K562 (cell line): ENCODE measurements at regions of chr3 and their contacts with region 1.

Region 1: DNA sequence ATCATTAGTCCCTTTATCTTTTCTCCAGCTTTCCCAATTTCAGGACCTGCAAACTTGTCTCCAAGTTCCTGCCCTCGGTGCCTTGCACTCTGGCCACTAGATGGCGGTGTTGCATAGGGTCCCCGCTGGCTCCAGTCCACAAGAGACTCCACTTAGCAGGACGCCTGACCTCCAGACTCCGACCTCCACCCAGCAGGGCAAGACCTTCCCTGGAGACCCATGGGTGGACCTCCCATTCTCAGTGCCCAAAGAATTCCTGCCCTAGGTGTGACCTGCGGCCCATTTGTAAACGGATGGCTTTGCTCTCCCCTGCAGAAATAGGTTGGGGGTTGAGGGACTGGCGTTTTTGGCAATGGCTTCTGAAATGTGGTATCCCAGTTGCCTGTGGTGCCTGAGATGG is 82.6 kb downstream of the LSM3 start:
- DNase-seq: peak; percentile 92 to 96 (median 94)
- ATAC-seq: peak; percentile 90
- H3K4me3 ChIP-seq: no peak overlapping the region
- H3K27ac ChIP-seq: no peak overlapping the region
- H3K4me1 ChIP-seq: peaks cover 20 to 25% of the 10 kb centered on the region in 2 experiments
- H3K27me3 ChIP-seq: no peaks in the 10 kb centered on the region
- CTCF ChIP-seq: peak; percentile 96 to 99 (median 99)
- EP300 ChIP-seq: peak; percentile 46; the same call in 1 of the 2 replicates
- POLR2A ChIP-seq: no peak
- RAD21 ChIP-seq: peak; percentile 99

Region 2: DNA sequence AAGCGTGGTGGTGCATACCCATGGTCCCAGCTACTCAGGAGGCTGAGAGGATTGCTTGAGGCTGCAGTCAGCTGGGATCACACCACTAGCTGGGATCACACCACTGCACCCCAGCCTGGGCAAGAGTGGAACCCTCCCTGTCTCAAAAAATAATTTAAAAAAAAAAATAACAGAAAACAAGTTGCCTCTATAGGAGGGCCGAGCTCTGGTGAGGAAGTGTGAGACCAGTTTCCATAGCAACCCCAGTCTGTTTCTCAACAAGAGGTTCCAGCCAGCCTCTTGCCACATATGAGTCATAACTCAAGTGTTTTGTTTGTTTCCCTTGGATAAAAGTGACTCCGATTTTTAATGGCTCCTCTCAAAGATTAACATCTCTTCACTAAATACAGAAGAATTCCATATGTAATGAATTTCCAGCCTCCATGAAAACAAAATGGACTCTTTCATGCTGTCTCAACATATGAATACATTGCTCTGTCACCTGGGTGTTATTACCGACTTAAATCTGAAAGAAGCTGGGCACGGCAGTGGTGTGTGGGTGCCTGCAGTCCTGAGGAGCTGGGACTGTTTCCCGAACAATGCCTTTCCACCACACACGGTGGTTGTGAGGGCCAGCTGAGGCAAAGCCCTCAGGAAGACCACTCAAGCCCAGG is 116.7 kb before region 1 on chr3:
- CTCF ChIA-PET with region 1: no interaction called
- POLR2A ChIA-PET with region 1: no interaction called
- in situ Hi-C with region 1: no loop called
- intact Hi-C with region 1: no loop called
- DNase-seq: peak; percentile 85 to 87 (median 86)
- ATAC-seq: peak; percentile 85
- H3K4me3 ChIP-seq: no peak overlapping the region
- H3K27ac ChIP-seq: peak overlapping the region; percentile 67; the same call in 2 of the 3 replicates
- H3K4me1 ChIP-seq: peaks cover 13 to 14% of the 10 kb centered on the region in 2 experiments
- H3K27me3 ChIP-seq: no peaks in the 10 kb centered on the region
- CTCF ChIP-seq: no peak
- EP300 ChIP-seq: peak; percentile 56
- POLR2A ChIP-seq: no peak
- RAD21 ChIP-seq: no peak

Region 3: GRCh38 chr3:14188041-14188754 is 73.0 kb before region 1 on chr3:
- CTCF ChIA-PET with region 1: no interaction called
- POLR2A ChIA-PET with region 1: no interaction called
- in situ Hi-C with region 1: no loop called
- intact Hi-C with region 1: no loop called
- DNase-seq: no peak
- ATAC-seq: peak; percentile 37; the same call in 1 of the 3 replicates
- H3K4me3 ChIP-seq: no peak overlapping the region
- H3K27ac ChIP-seq: no peak overlapping the region
- H3K4me1 ChIP-seq: no peaks in the 10 kb centered on the region
- H3K27me3 ChIP-seq: no peaks in the 10 kb centered on the region
- CTCF ChIP-seq: no peak
- EP300 ChIP-seq: no peak
- POLR2A ChIP-seq: no peak
- RAD21 ChIP-seq: no peak

Region 4: GRCh38 chr3:14210843-14211594 is 50.2 kb before region 1 on chr3:
- CTCF ChIA-PET with region 1: no interaction called
- POLR2A ChIA-PET with region 1: no interaction called
- in situ Hi-C with region 1: no loop called
- intact Hi-C with region 1: no loop called
- DNase-seq: no peak
- ATAC-seq: no peak
- H3K4me3 ChIP-seq: no peak overlapping the region
- H3K27ac ChIP-seq: peak overlapping the region; percentile 18; the same call in 1 of the 3 replicates
- H3K4me1 ChIP-seq: peaks cover 32 to 61% of the 10 kb centered on the region in 2 experiments
- H3K27me3 ChIP-seq: no peaks in the 10 kb centered on the region
- CTCF ChIP-seq: no peak
- EP300 ChIP-seq: no peak; the same call in 1 of the 2 replicates
- POLR2A ChIP-seq: no peak
- RAD21 ChIP-seq: no peak

Region 5: GRCh38 chr3:14402304-14402811 is 141.1 kb after region 1 on chr3 and contains the start of gene SLC6A6:
- CTCF ChIA-PET with region 1: no interaction called
- POLR2A ChIA-PET with region 1: interaction called, 3 read pairs
- in situ Hi-C with region 1: no loop called
- intact Hi-C with region 1: loop called (anchors 1 kb)
- DNase-seq: peak; percentile 94 to 97 (median 97)
- ATAC-seq: peak; percentile 80
- H3K4me3 ChIP-seq: peak within 1 kb of the TSS; percentile 92
- H3K27ac ChIP-seq: peak within 1 kb of the TSS; percentile 91
- H3K4me1 ChIP-seq: peaks cover 20 to 59% of the 10 kb centered on the region in 2 experiments; a peak in 4 of 5 replicates
- H3K27me3 ChIP-seq: no peaks in the 10 kb centered on the region
- CTCF ChIP-seq: peak; percentile 47 to 75 (median 64); a peak in 5 of 6 replicates
- EP300 ChIP-seq: 0 out of 2 replicates have a peak, but pooled peaks have one; percentile 14
- POLR2A ChIP-seq: peak; percentile 87
- RAD21 ChIP-seq: peak; percentile 52 to 67
- polyA plus RNA-seq, gene SLC6A6: 12.3 to 14.8 TPM

Region 6: DNA sequence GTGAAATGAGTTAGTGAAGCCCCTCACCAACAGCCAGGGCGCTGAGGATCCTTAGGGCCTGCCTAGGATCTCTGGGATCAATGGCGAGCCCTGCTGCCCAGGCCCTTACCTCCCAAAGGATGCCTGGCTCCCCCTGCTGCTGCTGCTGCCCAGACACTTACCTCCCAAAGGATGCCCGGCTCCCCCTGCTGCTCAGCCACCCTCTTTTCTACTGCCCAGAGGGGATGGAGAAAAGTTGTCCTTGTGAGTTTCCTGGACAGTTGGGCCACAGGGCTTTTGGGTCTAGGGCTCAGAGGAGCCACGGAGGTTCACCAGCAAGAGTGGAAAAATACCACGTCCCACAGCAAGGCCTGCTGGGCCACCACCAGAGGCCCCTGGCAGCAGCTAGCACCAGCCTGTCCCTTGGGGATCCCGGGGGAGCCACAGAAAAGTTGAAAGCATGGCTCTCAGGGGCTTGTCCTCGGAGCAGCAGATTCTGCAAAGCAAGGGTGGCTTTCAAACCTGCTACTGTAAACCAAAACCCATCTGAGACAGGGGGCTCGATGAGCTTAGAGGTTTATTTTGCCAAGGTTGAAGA is 200.6 kb after region 1 on chr3:
- CTCF ChIA-PET with region 1: interaction called, 69 read pairs
- POLR2A ChIA-PET with region 1: interaction called, 3 read pairs
- in situ Hi-C with region 1: loop called (anchors 5 kb)
- intact Hi-C with region 1: loop called (anchors 2 kb)
- DNase-seq: peak in 3 of 4 experiments; percentile 41 to 51 (median 42)
- ATAC-seq: peak; percentile 65
- H3K4me3 ChIP-seq: no peak overlapping the region
- H3K27ac ChIP-seq: no peak overlapping the region
- H3K4me1 ChIP-seq: peaks cover 9 to 12% of the 10 kb centered on the region in 2 experiments; a peak in 3 of 5 replicates
- H3K27me3 ChIP-seq: no peaks in the 10 kb centered on the region
- CTCF ChIP-seq: peak; percentile 73 to 98 (median 97)
- EP300 ChIP-seq: no peak
- POLR2A ChIP-seq: no peak
- RAD21 ChIP-seq: peak; percentile 88 to 93

Region 7: DNA sequence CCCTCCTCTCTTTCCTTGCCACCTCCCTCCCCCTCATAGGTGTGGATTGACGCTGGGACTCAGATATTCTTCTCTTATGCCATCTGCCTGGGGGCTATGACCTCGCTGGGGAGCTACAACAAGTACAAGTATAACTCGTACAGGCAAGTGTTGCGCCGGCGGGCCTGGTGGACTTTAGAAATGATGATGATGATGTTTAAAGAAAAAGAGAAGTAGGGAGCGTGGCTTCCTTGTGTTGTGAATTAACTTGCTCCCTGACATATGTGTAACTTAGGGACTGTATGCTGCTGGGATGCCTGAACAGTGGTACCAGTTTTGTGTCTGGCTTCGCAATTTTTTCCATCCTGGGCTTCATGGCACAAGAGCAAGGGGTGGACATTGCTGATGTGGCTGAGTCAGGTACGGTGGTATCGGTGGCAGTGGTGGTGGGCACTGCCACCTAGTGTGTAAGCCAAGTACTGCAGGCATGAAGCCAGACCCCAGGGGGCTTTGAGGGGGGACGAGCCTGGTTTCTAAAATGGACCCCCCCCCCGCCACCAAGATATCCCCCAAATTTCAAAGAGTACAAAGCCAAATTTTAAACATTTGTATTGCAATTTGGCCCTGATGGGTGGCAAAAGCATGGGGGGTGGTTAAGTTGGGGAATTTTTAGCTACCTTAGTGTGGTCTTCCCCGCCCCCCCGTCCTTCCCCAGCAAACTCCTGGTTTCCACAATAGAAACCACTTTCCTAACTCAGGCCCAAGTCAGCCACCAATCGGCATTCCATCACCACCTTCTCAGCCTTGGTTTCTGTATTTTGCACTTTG is 206.8 kb after region 1 on chr3:
- CTCF ChIA-PET with region 1: interaction called, 69 read pairs
- POLR2A ChIA-PET with region 1: interaction called, 3 read pairs
- in situ Hi-C with region 1: loop called (anchors 5 kb)
- intact Hi-C with region 1: loop called (anchors 1 kb)
- DNase-seq: peak; percentile 47 to 89 (median 84)
- ATAC-seq: peak; percentile 82
- H3K4me3 ChIP-seq: no peak overlapping the region
- H3K27ac ChIP-seq: no peak overlapping the region
- H3K4me1 ChIP-seq: peaks cover 0 to 4% of the 10 kb centered on the region in 2 experiments; a peak in 1 of 5 replicates
- H3K27me3 ChIP-seq: no peaks in the 10 kb centered on the region; a peak in 1 of 5 replicates
- CTCF ChIP-seq: peak; percentile 73 to 87 (median 77)
- EP300 ChIP-seq: no peak
- POLR2A ChIP-seq: no peak
- RAD21 ChIP-seq: peak; percentile 85 to 90

Region 8: GRCh38 chr3:14508961-14509795 is 247.9 kb after region 1 on chr3:
- CTCF ChIA-PET with region 1: no interaction called
- POLR2A ChIA-PET with region 1: no interaction called
- in situ Hi-C with region 1: no loop called
- intact Hi-C with region 1: loop called (anchors 5 kb)
- DNase-seq: peak; percentile 84 to 96 (median 94)
- ATAC-seq: peak; percentile 89
- H3K4me3 ChIP-seq: no peak overlapping the region
- H3K27ac ChIP-seq: no peak overlapping the region
- H3K4me1 ChIP-seq: peaks cover 0 to 36% of the 10 kb centered on the region in 2 experiments; a peak in 2 of 5 replicates
- H3K27me3 ChIP-seq: peaks cover 8 to 56% of the 10 kb centered on the region in 2 experiments; a peak in 4 of 5 replicates
- CTCF ChIP-seq: peak; percentile 87 to 90 (median 89)
- EP300 ChIP-seq: no peak
- POLR2A ChIP-seq: no peak
- RAD21 ChIP-seq: peak; percentile 55 to 81

Region 9: GRCh38 chr3:14548321-14548729 is 287.1 kb after region 1 on chr3:
- CTCF ChIA-PET with region 1: no interaction called
- POLR2A ChIA-PET with region 1: no interaction called
- in situ Hi-C with region 1: no loop called
- intact Hi-C with region 1: loop called (anchors 5 kb)
- DNase-seq: peak; percentile 74 to 78 (median 77)
- ATAC-seq: peak; percentile 96
- H3K4me3 ChIP-seq: no peak overlapping the region
- H3K27ac ChIP-seq: no peak overlapping the region
- H3K4me1 ChIP-seq: peaks cover 0 to 16% of the 10 kb centered on the region in 2 experiments; a peak in 2 of 5 replicates
- H3K27me3 ChIP-seq: peaks cover 12 to 74% of the 10 kb centered on the region in 2 experiments; a peak in 4 of 5 replicates
- CTCF ChIP-seq: peak; percentile 85 to 90 (median 90)
- EP300 ChIP-seq: no peak
- POLR2A ChIP-seq: no peak
- RAD21 ChIP-seq: peak; percentile 69 to 91